Activated CD4-positive, alpha-beta memory T cell treated with anti-CD3 and anti-CD28 coated beads, Interleukin-2, amount 10 ng/mL, durations not matched to agents 7 days and 5 days (primary cell): ENCODE measurements at regions of chr3 and their contacts with region 1.

Region 1: DNA sequence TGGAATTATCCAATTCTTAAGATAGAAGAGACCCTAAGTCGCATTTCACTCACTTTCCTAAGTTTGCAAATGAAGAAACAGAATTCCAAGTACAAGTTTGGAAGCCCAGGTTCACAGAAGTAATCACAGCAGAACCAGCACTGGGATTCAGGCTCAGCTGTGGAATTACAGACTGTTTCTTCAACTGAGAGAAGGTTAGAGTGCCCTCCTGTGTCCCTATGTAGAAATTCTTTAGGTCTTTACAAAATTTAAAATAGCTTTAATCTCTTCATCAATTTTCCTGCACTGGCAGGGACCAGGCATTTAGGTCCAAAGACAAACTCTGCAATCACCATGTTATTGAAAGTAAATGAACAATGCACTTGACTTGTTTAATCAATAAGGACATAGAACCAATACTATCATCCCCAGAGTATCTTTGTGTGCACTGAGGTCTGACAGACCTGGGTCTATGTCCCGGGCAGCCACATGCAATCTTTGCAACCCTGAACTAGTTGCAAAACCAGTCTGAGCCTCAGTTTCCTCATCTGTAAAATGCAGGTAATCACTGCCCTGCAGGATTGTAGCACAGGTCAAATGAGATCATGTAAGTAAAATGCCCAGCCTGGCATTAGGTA is 96.3 kb upstream of the ZBED2 start:
- DNase-seq: no peak
- H3K4me3 Mint-ChIP-seq: no peak overlapping the region
- H3K27ac Mint-ChIP-seq: no peak overlapping the region
- H3K4me1 Mint-ChIP-seq: peaks cover 51% of the 10 kb centered on the region
- H3K27me3 Mint-ChIP-seq: no peaks in the 10 kb centered on the region

Region 2: GRCh38 chr3:111577794-111578685 is 113.4 kb before region 1 on chr3:
- CTCF ChIA-PET with region 1: interaction called, 16 read pairs
- POLR2A ChIA-PET with region 1: no interaction called
- DNase-seq: no peak
- H3K4me3 Mint-ChIP-seq: no peak overlapping the region
- H3K27ac Mint-ChIP-seq: peak overlapping the region; percentile 68
- H3K4me1 Mint-ChIP-seq: peaks cover 67% of the 10 kb centered on the region
- H3K27me3 Mint-ChIP-seq: no peaks in the 10 kb centered on the region

Region 3: DNA sequence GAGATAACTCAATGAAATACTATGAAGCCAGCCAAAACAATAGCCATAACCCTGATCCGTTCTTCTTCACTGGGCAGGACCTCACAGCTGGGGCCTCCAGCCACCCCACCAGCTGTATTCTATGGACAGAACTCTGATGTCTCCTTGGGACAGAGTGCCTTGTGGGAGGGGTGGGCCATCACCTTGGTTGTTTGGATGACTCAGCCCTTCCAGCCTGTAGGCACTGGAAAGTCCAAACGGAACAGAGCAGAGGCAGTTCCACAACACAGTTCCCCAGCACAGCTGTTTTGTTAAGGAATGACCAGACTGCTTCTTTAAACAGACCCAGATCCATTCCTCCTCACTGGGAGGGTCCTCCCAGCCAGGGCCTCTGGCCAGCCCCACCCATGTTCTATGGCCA is 64.3 kb before region 1 on chr3:
- CTCF ChIA-PET with region 1: no interaction called
- POLR2A ChIA-PET with region 1: no interaction called
- DNase-seq: no peak
- H3K4me3 Mint-ChIP-seq: no peak overlapping the region
- H3K27ac Mint-ChIP-seq: no peak overlapping the region
- H3K4me1 Mint-ChIP-seq: peaks cover 8% of the 10 kb centered on the region
- H3K27me3 Mint-ChIP-seq: no peaks in the 10 kb centered on the region

Region 4: GRCh38 chr3:111676211-111677006 is 15.0 kb before region 1 on chr3:
- CTCF ChIA-PET with region 1: interaction called, 12 read pairs
- POLR2A ChIA-PET with region 1: interaction called, 3 read pairs
- DNase-seq: peak; percentile 42
- H3K4me3 Mint-ChIP-seq: peak overlapping the region; percentile 93
- H3K27ac Mint-ChIP-seq: peak overlapping the region; percentile 99
- H3K4me1 Mint-ChIP-seq: peaks cover 65% of the 10 kb centered on the region
- H3K27me3 Mint-ChIP-seq: no peaks in the 10 kb centered on the region

Region 5: GRCh38 chr3:111717601-111718000 is 26.2 kb after region 1 on chr3:
- CTCF ChIA-PET with region 1: interaction called, 29 read pairs
- POLR2A ChIA-PET with region 1: no interaction called
- DNase-seq: peak; percentile 74
- H3K4me3 Mint-ChIP-seq: no peak overlapping the region
- H3K27ac Mint-ChIP-seq: peak overlapping the region; percentile 1
- H3K4me1 Mint-ChIP-seq: peaks cover 3% of the 10 kb centered on the region
- H3K27me3 Mint-ChIP-seq: no peaks in the 10 kb centered on the region